Adrenal gland (tissue), 19 donors: ENCODE measurements at regions of chr17 and their contacts with region 1.

Region 1: GRCh38 chr17:30031214-30031869 is 85.3 kb upstream of the NSRP1 start:
- DNase-seq: no peak
- H3K4me3 ChIP-seq: no peak overlapping the region
- H3K27ac ChIP-seq: no peak overlapping the region
- H3K4me1 ChIP-seq: no peaks in the 10 kb centered on the region
- H3K27me3 ChIP-seq: no peaks in the 10 kb centered on the region
- CTCF ChIP-seq: no peak
- POLR2A ChIP-seq: no peak

Region 2: DNA sequence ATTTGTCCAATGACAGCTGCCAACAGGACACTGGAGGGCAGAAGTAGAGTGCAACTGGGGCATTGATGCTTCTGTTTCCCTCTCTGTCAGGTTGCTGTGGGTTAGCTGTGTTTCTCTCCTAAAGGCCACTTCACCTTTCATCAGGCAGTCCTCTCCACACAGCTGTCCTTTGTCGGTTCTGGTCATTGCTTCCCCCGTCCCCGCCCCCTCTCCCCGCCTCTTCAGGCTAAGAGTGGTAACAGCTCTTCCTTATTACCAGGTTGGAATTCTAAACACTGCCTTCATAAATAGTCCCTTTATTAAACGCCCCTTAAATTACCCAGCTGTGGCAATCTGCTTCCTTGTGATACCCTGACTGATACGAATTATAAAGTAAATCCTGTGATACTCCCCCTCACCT is 53.4 kb after region 1 on chr17:
- intact Hi-C with region 1: loop called (anchors 5 to 10 kb)
- DNase-seq: no peak
- H3K4me3 ChIP-seq: no peak overlapping the region
- H3K27ac ChIP-seq: no peak overlapping the region
- H3K4me1 ChIP-seq: no peaks in the 10 kb centered on the region
- H3K27me3 ChIP-seq: peaks cover 6% of the 10 kb centered on the region
- CTCF ChIP-seq: no peak
- POLR2A ChIP-seq: no peak